ENCODE measurements at regions of chr10 and their contacts with region 1.

Region 1: GRCh38 chr10:133373104-133373624 is at the start of gene ECHS1:
- H3K4me3 Mint-ChIP-seq: peak within 1 kb of the TSS; percentile 98
- H3K27ac Mint-ChIP-seq: peak within 1 kb of the TSS; percentile 93
- H3K4me1 Mint-ChIP-seq: peaks cover 64% of the 10 kb centered on the region
- H3K27me3 Mint-ChIP-seq: no peaks in the 10 kb centered on the region

Region 2: GRCh38 chr10:133067149-133068105 is 305.7 kb before region 1 on chr10:
- intact Hi-C with region 1: no loop called
- H3K4me3 Mint-ChIP-seq: no peak overlapping the region
- H3K27ac Mint-ChIP-seq: no peak overlapping the region
- H3K4me1 Mint-ChIP-seq: peaks cover 6% of the 10 kb centered on the region
- H3K27me3 Mint-ChIP-seq: peaks cover 6% of the 10 kb centered on the region

Region 3: DNA sequence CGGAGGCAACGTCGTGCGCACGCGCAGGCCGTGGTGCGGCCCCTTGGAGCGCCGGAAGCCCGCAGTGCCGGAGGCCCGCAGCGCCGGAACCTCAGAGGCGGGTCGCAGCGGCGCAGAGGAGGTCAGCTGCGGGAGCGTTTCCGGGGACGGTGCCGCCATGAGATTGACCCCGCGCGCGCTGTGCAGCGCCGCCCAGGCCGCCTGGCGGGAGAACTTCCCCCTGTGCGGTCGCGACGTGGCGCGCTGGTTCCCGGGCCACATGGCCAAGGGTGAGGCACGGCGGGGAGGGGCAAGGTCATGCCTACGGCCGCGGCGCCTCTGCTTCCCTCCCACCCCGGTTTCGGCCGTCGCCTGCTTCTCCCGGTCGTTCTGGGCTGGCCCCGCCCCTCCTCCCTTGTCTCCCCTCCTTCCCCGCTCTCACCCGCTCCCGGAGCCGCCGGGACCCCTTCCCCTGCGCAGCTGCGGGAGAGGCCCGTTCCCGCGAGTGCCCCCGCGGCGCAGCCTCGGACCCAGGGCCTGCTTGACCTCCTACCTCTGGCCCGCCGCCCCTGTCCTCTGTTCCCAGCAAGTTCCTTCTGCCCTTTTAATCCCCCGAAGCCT is 21.0 kb after region 1 on chr10 and contains the start of gene MTG1:
- intact Hi-C with region 1: loop called (anchors 1 kb)
- H3K4me3 Mint-ChIP-seq: peak within 1 kb of the TSS; percentile 88
- H3K27ac Mint-ChIP-seq: peak within 1 kb of the TSS; percentile 93
- H3K4me1 Mint-ChIP-seq: peaks cover 59% of the 10 kb centered on the region
- H3K27me3 Mint-ChIP-seq: no peaks in the 10 kb centered on the region

Measured in dendritic cell treated with granulocyte-macrophage colony-stimulating factor and Interleukin-4, amounts not matched to agents 40 ng/mL and 50 ng/mL, for 4 days (primary cell).